ENCODE measurements at regions of chr17 and their contacts with region 1.

Region 1: DNA sequence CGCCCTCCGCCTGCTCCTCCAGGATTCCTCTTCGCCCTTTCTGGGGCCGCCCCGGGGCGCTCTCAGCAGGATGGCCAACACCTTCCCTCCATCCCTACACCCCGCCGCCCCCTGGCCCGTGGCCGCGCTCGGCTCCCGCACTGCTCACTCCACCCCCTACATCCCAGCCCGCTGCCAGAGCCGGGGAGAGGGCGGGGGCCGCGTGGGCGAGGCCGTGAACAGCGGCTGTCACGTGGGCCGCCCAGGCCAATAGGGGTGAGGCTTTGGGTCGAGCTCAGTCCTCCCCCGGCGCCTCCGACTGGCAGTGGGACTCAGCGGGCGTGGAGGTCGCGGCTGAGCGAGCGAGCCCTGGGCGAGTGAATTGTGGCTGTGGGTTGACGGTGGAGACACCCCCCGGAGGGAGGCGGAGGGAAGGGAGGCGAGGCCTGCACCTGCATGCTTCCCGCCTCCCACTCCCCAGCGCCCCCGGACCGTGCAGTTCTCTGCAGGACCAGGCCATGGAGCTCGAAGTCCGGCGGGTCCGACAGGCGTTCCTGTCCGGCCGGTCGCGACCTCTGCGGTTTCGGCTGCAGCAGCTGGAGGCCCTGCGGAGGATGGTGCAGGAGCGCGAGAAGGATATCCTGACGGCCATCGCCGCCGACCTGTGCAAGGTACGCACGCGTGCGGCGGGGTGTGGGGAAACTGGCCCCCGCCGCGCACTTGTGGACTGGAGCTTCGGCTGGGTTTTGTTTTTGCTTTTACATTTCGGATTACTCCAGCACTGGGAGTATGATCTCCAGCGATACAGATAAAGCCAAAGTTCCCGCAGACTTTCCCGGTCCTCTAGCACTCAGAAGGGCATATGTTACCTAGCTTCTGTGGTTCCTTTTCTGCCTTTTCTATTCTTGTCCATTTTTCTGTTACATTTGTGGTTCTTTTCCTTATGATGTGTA is at the start of gene ALDH3A2:
- DNase-seq: peak; percentile 93 to 98
- H3K4me3 ChIP-seq: peak within 1 kb of the TSS; percentile 65
- H3K4me1 ChIP-seq: peaks cover 27% of the 10 kb centered on the region
- H3K27me3 ChIP-seq: no peaks in the 10 kb centered on the region

Region 2: DNA sequence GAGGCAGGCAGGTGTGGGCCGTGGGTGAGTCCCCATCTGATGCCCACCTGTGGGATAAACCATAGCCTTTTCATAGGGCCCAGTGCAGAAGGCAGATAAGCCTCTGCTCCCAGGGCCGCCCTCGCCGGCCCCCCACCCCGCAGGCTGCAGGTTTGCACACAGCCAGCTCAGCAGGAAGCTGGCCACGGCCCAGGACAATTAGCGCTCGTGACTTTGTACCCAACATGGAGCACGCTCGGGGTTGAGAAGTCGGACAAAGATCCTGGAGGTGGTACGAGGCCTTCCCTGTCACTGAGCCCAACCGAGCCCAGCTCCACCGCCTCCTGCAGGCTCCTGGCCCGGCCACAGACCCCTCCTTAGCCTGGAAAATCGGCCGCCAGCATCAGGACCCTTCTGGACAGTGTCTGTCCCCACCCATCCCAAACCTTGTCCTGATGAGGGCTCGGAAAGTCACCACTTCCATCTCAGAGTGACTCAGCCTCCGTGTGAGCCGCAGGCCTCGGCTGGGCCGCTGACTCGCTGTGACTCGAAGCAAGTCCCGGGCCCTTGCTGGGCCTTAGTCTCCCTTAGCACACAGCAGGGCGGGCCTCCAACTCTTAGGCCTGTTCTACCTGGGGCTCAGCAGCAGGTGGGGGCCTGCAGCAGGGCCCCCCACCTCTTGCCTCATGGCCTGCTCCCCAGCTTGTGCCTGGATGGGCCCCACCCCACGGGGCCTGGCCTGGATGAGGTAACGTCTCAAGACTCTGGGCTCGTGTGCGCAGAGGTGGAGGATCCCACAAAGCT is 666.9 kb before region 1 on chr17:
- in situ Hi-C with region 1: loop called (anchors 25 kb)
- DNase-seq: no peak
- H3K4me3 ChIP-seq: no peak overlapping the region
- H3K4me1 ChIP-seq: no peaks in the 10 kb centered on the region
- H3K27me3 ChIP-seq: no peaks in the 10 kb centered on the region

Region 3: GRCh38 chr17:19362277-19363113 is 286.2 kb before region 1 on chr17 and contains the start of gene B9D1:
- in situ Hi-C with region 1: no loop called
- DNase-seq: peak; percentile 72 to 91
- H3K4me3 ChIP-seq: peak within 1 kb of the TSS; percentile 82
- H3K4me1 ChIP-seq: peaks cover 12% of the 10 kb centered on the region
- H3K27me3 ChIP-seq: no peaks in the 10 kb centered on the region

Region 4: DNA sequence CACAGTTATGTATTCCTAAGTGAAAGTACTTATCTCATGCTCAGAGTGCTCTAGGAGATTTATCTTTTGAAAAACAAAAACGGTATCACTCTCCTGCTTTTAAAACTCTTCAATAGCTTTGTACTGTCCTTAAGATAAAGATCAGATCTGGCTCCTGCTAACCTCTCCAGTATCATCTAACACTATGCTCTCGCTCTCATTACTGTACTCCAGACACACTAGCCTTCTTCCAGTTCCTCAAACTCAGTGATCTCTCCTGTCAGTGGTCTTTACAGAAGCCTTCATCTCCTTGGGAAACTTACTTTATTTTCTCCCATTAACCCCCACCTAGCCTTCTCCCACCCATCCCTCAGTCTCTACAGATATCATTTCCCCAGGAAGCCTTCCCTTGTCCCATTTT is 208.9 kb after region 1 on chr17:
- in situ Hi-C with region 1: no loop called
- DNase-seq: no peak
- H3K4me3 ChIP-seq: no peak overlapping the region
- H3K4me1 ChIP-seq: no peaks in the 10 kb centered on the region
- H3K27me3 ChIP-seq: no peaks in the 10 kb centered on the region

Region 5: GRCh38 chr17:20091174-20092029 is 442.7 kb after region 1 on chr17:
- in situ Hi-C with region 1: no loop called
- DNase-seq: no peak
- H3K4me3 ChIP-seq: no peak overlapping the region
- H3K4me1 ChIP-seq: peaks cover 6% of the 10 kb centered on the region
- H3K27me3 ChIP-seq: no peaks in the 10 kb centered on the region